Naive thymus-derived CD4-positive, alpha-beta T cell (primary cell): ENCODE measurements at regions of chr13 and their contacts with region 1.

Region 1: GRCh38 chr13:84399320-84400085 is 517.2 kb upstream of the SLITRK1 start:
- DNase-seq: peak in 2 of 9 donors; percentile 3 to 11
- ATAC-seq: no peak
- H3K4me3 ChIP-seq: no peak overlapping the region
- H3K4me3 Mint-ChIP-seq: no peak overlapping the region
- H3K27ac ChIP-seq: no peak overlapping the region
- H3K27ac Mint-ChIP-seq: no peak overlapping the region
- H3K4me1 ChIP-seq: no peaks in the 10 kb centered on the region
- H3K4me1 Mint-ChIP-seq: no peaks in the 10 kb centered on the region
- H3K27me3 ChIP-seq: no peaks in the 10 kb centered on the region
- H3K27me3 Mint-ChIP-seq: no peaks in the 10 kb centered on the region

Region 2: GRCh38 chr13:83414393-83414792 is 985.1 kb before region 1 on chr13:
- CTCF ChIA-PET with region 1: no interaction called
- POLR2A ChIA-PET with region 1: no interaction called
- intact Hi-C with region 1: no loop called
- DNase-seq: no peak
- ATAC-seq: no peak
- H3K4me3 ChIP-seq: no peak overlapping the region
- H3K4me3 Mint-ChIP-seq: no peak overlapping the region
- H3K27ac ChIP-seq: no peak overlapping the region
- H3K27ac Mint-ChIP-seq: no peak overlapping the region
- H3K4me1 ChIP-seq: no peaks in the 10 kb centered on the region
- H3K4me1 Mint-ChIP-seq: no peaks in the 10 kb centered on the region
- H3K27me3 ChIP-seq: no peaks in the 10 kb centered on the region
- H3K27me3 Mint-ChIP-seq: no peaks in the 10 kb centered on the region

Region 3: DNA sequence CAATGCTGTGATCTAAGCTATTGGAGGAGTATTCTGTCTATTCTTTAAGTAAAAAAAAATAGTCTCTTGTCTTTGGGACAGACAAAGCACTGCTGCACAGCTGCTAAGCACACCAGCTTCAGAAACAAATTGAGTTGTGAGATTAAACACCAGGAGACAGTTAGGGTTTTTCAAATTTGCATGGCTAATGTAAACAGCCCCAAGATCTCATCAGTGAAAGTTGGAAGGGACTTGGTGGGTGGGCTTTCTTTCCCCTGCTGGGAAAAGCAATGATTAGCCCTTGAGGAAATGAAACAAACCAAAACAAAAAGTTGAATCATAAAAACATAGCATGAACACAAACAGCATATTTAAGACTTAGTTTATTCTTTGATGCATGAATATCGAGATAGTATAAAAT is 373.7 kb before region 1 on chr13:
- CTCF ChIA-PET with region 1: no interaction called
- POLR2A ChIA-PET with region 1: no interaction called
- intact Hi-C with region 1: no loop called
- DNase-seq: no peak
- ATAC-seq: no peak
- H3K4me3 ChIP-seq: no peak overlapping the region
- H3K4me3 Mint-ChIP-seq: no peak overlapping the region
- H3K27ac ChIP-seq: no peak overlapping the region
- H3K27ac Mint-ChIP-seq: no peak overlapping the region
- H3K4me1 ChIP-seq: no peaks in the 10 kb centered on the region
- H3K4me1 Mint-ChIP-seq: no peaks in the 10 kb centered on the region
- H3K27me3 ChIP-seq: no peaks in the 10 kb centered on the region
- H3K27me3 Mint-ChIP-seq: no peaks in the 10 kb centered on the region

Region 4: DNA sequence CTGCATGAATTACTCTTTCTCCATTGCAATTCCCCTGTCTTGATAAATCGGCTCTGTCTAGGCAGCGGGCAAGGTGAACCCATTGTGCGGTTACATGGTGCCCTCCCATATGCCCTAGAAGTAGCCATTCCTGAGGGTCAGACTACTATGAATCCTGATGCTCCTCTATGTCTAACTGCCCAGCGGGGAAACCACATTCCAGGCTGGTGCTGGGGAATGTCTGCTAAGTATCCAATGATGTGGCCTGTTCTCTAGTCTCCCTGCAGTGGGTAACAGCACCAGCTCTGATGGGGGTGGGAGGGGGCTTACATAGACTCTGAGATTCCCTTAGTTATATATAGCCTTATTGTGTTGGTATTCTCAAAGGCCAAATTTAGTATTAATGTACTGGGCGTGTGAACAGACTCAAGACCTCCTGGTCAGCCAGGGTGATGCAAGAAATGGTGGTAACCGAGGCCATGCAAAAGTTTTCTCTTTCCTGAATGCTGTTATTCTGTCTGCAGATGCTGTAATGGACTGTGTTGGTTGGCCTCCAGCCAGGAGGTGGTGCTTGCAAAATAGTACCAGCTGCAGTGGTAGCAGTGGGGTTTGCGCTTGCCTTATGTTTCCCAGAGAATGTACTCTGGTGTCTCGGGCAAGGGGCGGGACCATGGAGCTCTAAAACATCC is 47.6 kb after region 1 on chr13:
- CTCF ChIA-PET with region 1: no interaction called
- POLR2A ChIA-PET with region 1: no interaction called
- intact Hi-C with region 1: loop called in 1 of 2 experiments (anchors 5 kb)
- DNase-seq: no peak
- ATAC-seq: no peak
- H3K4me3 ChIP-seq: no peak overlapping the region
- H3K4me3 Mint-ChIP-seq: no peak overlapping the region
- H3K27ac ChIP-seq: no peak overlapping the region
- H3K27ac Mint-ChIP-seq: no peak overlapping the region
- H3K4me1 ChIP-seq: no peaks in the 10 kb centered on the region
- H3K4me1 Mint-ChIP-seq: no peaks in the 10 kb centered on the region
- H3K27me3 ChIP-seq: no peaks in the 10 kb centered on the region
- H3K27me3 Mint-ChIP-seq: no peaks in the 10 kb centered on the region